Astrocyte of the cerebellum (primary cell): ENCODE measurements at regions of chrX and their contacts with region 1.

Region 1: DNA sequence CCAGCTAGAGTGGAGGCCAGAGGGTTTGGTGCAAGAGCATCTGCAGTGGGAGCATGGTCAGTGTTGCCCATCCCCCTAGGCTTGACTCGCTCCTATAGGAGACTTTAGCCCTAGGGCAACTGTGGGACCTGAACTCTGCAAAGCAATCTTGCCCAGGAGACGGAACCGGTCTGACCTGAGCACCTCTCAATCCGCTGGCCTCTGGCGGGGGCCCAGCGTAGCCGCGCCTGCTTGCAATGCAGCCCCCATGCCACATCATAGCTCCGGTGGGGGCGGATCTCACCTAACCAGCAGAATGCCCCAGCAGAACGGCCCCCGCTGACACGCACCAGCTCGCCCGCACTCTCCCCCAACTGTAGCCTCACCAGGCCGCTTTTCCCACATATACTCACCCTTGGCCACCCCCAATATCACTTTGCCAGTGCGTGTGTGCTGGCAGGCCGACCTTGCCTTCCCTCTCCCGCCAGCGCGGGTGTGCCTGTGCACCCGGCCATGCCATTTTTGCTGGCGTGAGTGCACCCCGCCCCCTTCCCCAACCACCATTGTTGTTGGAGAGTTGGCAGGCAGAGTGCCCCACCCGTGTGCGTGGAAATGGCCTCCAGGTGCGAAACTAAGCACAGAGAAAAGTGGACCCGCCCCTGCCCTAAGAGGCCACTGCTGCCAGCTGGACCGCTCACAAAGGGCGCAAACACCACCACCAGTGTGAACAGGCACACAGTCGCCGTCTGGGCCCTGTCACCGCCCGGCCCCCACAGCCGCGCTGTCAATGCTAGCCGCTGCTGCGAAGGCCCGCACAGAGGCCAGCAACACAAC is 5.8 kb downstream of the BEX4 start:
- DNase-seq: no peak
- H3K4me3 ChIP-seq: no peak overlapping the region
- CTCF ChIP-seq: no peak

Region 2: DNA sequence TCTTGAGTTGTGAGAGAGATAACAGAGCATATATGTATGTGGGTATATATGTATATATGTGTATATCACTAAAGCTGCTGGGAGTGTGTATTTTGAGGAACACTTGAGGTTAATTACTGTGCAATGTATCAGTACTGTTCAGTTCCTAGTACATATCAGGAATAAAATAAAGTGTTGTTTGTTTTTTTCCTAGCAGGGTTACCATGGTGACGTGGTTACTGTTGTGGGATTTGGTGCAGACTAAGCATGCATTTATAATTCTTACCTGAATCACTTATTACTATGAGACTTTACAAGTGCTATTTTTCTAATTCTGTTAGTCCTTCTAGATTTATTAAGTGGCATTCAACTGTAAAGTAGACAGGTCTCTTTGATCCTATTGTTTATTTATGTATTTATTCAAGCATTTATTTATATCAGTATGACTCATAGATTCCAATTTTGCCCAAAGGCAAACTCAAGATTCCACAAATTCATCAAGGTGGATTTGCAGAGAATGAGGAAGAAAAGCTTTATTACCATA is 32.7 kb before region 1 on chrX:
- in situ Hi-C with region 1: loop called (anchors 5 kb)
- DNase-seq: peak; percentile 13
- H3K4me3 ChIP-seq: no peak overlapping the region
- CTCF ChIP-seq: no peak